Mammary epithelial cell (primary cell): ENCODE measurements at regions of chr10 and their contacts with region 1.

Region 1: DNA sequence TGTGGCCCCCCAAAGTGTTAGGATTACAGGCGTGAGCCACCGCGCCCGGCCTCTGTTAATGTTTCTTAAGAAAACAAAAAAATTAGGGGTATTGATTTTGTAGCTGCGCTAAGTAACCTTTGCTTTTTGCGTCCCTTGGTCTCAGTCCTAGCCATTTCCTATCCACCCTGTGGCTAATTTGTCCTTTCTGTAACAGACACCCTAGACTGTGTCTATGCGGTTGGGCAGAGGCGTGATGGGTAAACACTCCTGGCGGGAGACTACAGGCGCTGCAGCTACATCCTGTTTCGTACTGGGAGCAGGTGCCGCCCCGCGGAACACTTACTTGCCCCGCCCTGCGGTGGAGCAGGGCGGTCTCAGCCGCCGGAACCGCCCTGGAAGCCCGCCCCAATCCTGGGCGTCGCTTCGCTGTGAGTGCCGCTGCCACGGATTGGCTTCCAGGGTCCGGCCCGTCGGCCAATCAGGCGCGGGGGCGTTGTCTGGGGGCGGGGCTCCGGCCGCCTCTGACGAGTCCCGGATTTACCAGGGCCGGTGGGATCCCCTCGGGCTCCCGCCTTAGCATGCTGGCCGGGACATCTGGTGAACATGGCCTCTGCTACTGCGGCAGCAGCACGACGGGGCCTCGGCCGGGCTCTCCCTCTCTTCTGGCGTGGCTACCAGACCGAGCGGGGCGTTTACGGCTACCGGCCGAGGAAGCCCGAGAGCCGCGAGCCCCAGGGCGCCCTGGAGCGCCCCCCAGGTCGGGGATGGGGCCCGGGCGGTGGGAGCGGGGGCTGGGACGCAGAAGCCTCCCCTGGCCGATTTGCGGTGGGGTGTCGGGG is at the start of gene DHTKD1:
- DNase-seq: peak; percentile 98
- H3K4me3 ChIP-seq: peak within 1 kb of the TSS; percentile 82 to 91 (median 87)
- H3K27ac ChIP-seq: peak within 1 kb of the TSS; percentile 71
- H3K4me1 ChIP-seq: peaks cover 19% of the 10 kb centered on the region
- H3K27me3 ChIP-seq: no peaks in the 10 kb centered on the region
- CTCF ChIP-seq: peak in 1 of 2 donors; percentile 53
- total RNA-seq, gene DHTKD1: 19.9 to 20.8 TPM

Region 2: GRCh38 chr10:12042797-12043651 is 25.6 kb before region 1 on chr10 and contains the start of gene UPF2:
- CTCF ChIA-PET with region 1: interaction called, 7 read pairs
- dilution Hi-C with region 1: no loop called
- in situ Hi-C with region 1: no loop called
- intact Hi-C with region 1: loop called (anchors 1 kb)
- DNase-seq: peak; percentile 98
- H3K4me3 ChIP-seq: peak within 1 kb of the TSS; percentile 90 to 96 (median 92)
- H3K27ac ChIP-seq: peak within 1 kb of the TSS; percentile 98
- H3K4me1 ChIP-seq: peaks cover 16% of the 10 kb centered on the region
- H3K27me3 ChIP-seq: no peaks in the 10 kb centered on the region
- CTCF ChIP-seq: no peak
- total RNA-seq, gene UPF2: 12.0 to 23.7 TPM

Region 3: GRCh38 chr10:12195603-12196506 is 127.2 kb after region 1 on chr10 and contains the starts of genes CDC123 and NUDT5:
- CTCF ChIA-PET with region 1: no interaction called
- dilution Hi-C with region 1: no loop called
- in situ Hi-C with region 1: no loop called
- intact Hi-C with region 1: loop called (anchors 10 kb)
- DNase-seq: peak; percentile 89
- H3K4me3 ChIP-seq: peak within 1 kb of the TSS; percentile 67 to 84 (median 77)
- H3K27ac ChIP-seq: peak within 1 kb of the TSS; percentile 90
- H3K4me1 ChIP-seq: peaks cover 22% of the 10 kb centered on the region
- H3K27me3 ChIP-seq: no peaks in the 10 kb centered on the region
- CTCF ChIP-seq: peak in 1 of 2 donors; percentile 17
- total RNA-seq, gene CDC123: 73.5 to 97.0 TPM
- total RNA-seq, gene NUDT5: 46.3 to 78.9 TPM